ENCODE measurements at regions of chr1 and their contacts with region 1.

Region 1: DNA sequence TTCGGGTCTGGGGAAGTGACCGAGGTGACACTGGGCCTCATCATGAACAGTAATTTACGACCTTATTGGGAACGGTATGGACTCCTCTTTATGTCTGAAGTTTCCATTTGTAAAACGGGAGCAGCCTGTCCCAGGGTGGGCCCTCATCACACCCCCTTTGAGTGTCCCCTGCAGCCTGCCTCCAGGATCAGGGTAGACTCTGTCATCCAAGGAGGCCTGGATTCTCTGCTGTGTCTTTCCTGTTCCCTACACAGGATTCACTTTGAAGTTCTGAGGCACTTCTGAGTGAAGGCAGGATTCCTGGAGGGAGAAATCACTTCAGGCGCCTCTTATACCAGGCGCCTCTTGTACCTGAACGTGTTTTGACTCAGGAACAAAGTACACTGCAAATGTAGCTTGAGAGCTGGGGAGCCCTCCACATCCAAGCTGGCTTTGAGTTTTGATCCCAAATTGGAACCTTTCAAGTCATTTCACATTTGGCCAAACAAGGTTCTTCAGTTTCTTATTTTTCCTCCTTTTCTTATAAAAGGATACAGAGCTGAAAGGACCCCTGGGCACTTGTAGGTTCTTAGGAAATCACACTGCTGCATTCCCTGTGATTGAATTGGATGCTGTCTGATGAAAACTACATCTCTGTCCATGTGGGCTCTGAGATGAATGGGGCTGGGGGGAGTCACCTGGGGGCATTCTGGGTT is 106.0 kb downstream of the SUSD4 start:
- DNase-seq: no peak
- ATAC-seq: no peak
- H3K4me3 ChIP-seq: no peak overlapping the region
- H3K4me3 Mint-ChIP-seq: no peak overlapping the region
- H3K27ac ChIP-seq: no peak overlapping the region
- H3K27ac Mint-ChIP-seq: no peak overlapping the region
- H3K4me1 ChIP-seq: no peaks in the 10 kb centered on the region
- H3K4me1 Mint-ChIP-seq: peaks cover 3 to 16% (median 4%) of the 10 kb centered on the region in 3 donors
- H3K27me3 ChIP-seq: no peaks in the 10 kb centered on the region
- H3K27me3 Mint-ChIP-seq: no peaks in the 10 kb centered on the region

Region 2: DNA sequence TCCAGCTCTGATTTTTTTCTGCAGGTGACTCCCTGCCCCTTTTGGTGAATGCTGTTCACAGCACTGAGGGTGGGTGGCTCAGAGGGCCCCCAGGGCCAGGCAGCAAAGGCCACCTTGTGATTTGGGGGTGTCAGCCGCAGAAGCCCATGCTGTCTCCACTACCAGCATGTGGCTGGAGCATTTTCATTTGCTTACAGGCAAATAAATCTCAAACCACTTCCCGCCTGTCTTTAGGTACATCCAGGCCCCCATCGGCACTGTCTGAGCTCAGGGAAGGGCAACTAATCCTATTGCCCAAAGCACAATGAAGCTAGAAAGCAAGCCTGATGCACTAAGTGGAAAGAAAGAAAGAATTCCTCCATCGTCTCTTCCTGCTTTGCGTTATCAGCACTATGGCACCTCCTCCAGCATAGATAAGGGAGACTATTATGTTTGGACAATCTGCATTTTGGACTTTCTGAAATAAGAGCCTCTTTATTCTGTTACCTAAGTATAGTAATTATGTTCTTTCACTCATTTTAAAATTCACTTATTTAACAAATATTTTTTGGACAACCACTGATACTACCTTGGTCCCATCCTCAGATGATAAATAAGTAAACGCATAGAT is 14.5 kb before region 1 on chr1:
- CTCF ChIA-PET with region 1: no interaction called
- POLR2A ChIA-PET with region 1: interaction called in 1 of 2 experiments, 12 read pairs
- DNase-seq: no peak
- ATAC-seq: no peak
- H3K4me3 ChIP-seq: no peak overlapping the region
- H3K4me3 Mint-ChIP-seq: no peak overlapping the region
- H3K27ac ChIP-seq: no peak overlapping the region
- H3K27ac Mint-ChIP-seq: no peak overlapping the region
- H3K4me1 ChIP-seq: peaks cover 16 to 24% of the 10 kb centered on the region in 2 experiments
- H3K4me1 Mint-ChIP-seq: peaks cover 38 to 60% (median 48%) of the 10 kb centered on the region in 3 donors
- H3K27me3 ChIP-seq: peaks cover 0 to 11% of the 10 kb centered on the region in 2 experiments
- H3K27me3 Mint-ChIP-seq: no peaks in the 10 kb centered on the region